IMR-90 (cell line): ENCODE measurements at regions of chr20 and their contacts with region 1.

Region 1: DNA sequence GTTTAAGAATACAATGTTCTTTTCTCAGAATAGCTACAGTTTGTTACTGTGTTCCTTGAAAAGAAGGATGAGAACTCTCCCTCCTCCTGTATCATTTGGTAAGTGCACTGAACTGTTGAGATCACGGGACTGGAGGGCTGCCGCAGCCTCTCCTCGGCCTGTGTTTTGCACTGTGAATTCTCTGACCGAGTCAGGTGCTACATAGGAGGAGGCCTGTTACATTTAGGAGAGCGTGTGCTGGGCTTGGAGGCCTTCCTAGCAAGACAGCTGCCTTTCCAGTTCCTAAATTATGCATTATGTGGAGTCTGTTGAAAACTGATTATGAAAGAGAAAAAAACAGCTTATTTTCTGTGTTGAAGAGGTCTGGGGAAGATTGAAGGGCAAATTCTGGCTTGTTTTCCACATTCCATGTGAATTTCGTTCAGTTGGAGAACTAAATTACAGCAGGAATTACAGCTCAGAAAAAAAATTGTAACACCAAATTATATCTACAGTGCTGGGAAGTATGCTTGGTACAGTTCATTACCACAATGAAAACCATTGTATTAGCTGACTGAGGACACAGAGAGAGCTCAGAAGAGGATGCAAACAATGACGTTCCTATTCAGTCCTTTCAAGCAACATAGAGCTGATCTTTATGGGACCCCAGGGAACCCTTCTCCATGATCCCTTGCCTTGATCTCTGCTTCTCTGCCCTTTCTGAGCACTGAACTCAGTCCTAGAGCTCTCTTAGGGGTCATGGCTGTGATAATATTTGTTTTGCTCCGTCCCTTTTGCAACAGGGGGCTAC is 2.8 kb downstream of the TMC2 start:
- DNase-seq: no peak
- ATAC-seq: no peak
- H3K4me3 ChIP-seq: no peak overlapping the region
- H3K27ac ChIP-seq: no peak overlapping the region
- H3K4me1 ChIP-seq: no peaks in the 10 kb centered on the region
- H3K27me3 ChIP-seq: peaks cover 49% of the 10 kb centered on the region
- CTCF ChIP-seq: no peak
- POLR2A ChIP-seq: no peak
- RAD21 ChIP-seq: no peak

Region 2: GRCh38 chr20:1777476-1777820 is 761.7 kb before region 1 on chr20:
- CTCF ChIA-PET with region 1: no interaction called
- POLR2A ChIA-PET with region 1: no interaction called
- dilution Hi-C with region 1: no loop called
- in situ Hi-C with region 1: no loop called
- intact Hi-C with region 1: no loop called
- DNase-seq: no peak
- ATAC-seq: no peak
- H3K4me3 ChIP-seq: no peak overlapping the region
- H3K27ac ChIP-seq: no peak overlapping the region
- H3K4me1 ChIP-seq: peaks cover 4% of the 10 kb centered on the region
- H3K27me3 ChIP-seq: peaks cover 16% of the 10 kb centered on the region
- CTCF ChIP-seq: no peak
- POLR2A ChIP-seq: no peak
- RAD21 ChIP-seq: no peak

Region 3: GRCh38 chr20:2402271-2402980 is 136.7 kb before region 1 on chr20:
- CTCF ChIA-PET with region 1: no interaction called
- POLR2A ChIA-PET with region 1: no interaction called
- dilution Hi-C with region 1: no loop called
- in situ Hi-C with region 1: no loop called
- intact Hi-C with region 1: no loop called
- DNase-seq: peak; percentile 51
- ATAC-seq: peak; percentile 70
- H3K4me3 ChIP-seq: no peak overlapping the region
- H3K27ac ChIP-seq: no peak overlapping the region
- H3K4me1 ChIP-seq: no peaks in the 10 kb centered on the region
- H3K27me3 ChIP-seq: no peaks in the 10 kb centered on the region; the same call in 1 of the 2 replicates
- CTCF ChIP-seq: peak; percentile 44
- POLR2A ChIP-seq: no peak
- RAD21 ChIP-seq: peak; percentile 34

Region 4: DNA sequence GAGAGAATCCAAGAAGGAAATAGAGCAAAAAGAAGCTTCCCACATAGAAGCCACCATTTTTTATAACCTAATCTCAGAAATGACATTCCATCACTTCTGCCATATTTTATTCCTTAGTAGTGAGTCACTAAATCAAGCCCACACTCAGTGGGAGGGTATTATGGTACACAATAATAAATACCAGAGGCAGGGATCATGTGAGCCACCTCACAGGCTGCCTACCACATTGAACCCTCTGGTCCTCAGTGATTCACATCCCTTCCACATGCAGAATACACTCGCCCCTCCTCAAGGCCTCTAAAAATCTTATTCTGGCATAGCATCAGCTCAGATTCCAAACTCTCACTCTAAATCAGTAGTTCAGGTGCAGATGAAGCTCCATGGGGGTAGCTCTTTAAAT is 46.7 kb after region 1 on chr20:
- CTCF ChIA-PET with region 1: no interaction called
- POLR2A ChIA-PET with region 1: no interaction called
- dilution Hi-C with region 1: no loop called
- in situ Hi-C with region 1: no loop called
- intact Hi-C with region 1: loop called (anchors 5 kb)
- DNase-seq: peak; percentile 72
- ATAC-seq: peak; percentile 67
- H3K4me3 ChIP-seq: no peak overlapping the region
- H3K27ac ChIP-seq: no peak overlapping the region
- H3K4me1 ChIP-seq: 0 out of 2 replicates have a peak, but pooled peaks cover 2% of the 10 kb centered on the region
- H3K27me3 ChIP-seq: peaks cover 2% of the 10 kb centered on the region; the same call in 1 of the 2 replicates
- CTCF ChIP-seq: no peak
- POLR2A ChIP-seq: no peak
- RAD21 ChIP-seq: no peak